Mammary epithelial cell (primary cell): ENCODE measurements at regions of chr2 and their contacts with region 1.

Region 1: DNA sequence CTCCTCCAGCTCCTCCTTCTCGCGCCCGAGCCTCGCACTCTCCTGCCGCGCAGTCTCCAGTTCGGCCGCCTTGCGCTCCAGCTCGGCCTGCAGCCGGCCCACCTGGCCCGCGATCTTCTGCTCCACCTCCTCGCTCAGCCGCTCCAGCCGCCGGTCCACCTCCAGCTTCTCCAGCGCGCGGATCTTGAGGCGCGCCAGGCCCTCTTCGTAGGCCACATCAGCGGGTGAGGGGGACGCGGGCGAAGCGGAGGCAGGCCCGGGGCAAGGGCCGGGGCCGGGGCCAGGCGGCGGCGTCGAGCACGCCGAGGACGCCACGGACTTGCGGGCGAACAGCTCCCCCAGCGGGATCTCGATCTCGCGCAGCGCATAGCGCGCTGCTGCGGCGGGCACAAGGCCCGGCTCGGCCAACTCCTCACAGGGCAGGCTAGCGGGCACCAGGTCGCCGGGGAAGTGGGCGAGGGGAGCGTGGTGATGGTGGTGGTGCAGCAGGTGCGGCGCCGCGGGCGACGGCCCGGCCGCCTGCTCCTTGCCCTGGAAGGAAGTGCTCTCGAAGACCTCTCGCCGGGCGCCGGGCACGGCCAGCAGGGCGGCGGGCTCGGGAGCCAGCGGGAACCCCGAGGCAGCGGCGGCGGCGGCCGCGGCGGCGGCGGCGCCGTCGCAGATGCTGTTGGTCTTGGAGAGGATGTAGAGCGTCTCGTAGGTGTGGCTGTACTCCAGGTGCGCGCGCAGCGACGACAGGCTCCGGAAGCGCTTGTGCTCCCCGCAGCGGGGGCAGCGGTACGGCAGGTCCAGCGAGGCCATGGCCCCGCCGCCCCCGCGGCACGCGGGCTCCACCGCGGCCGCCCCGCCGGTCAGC is 15.2 kb downstream of the FBXO41 start:
- DNase-seq: peak; percentile 70
- H3K4me3 ChIP-seq: peak overlapping the region; percentile 14 to 50 (median 50)
- H3K27ac ChIP-seq: no peak overlapping the region
- H3K4me1 ChIP-seq: peaks cover 13% of the 10 kb centered on the region
- H3K27me3 ChIP-seq: no peaks in the 10 kb centered on the region
- CTCF ChIP-seq: peak in 1 of 2 donors; percentile 34

Region 2: DNA sequence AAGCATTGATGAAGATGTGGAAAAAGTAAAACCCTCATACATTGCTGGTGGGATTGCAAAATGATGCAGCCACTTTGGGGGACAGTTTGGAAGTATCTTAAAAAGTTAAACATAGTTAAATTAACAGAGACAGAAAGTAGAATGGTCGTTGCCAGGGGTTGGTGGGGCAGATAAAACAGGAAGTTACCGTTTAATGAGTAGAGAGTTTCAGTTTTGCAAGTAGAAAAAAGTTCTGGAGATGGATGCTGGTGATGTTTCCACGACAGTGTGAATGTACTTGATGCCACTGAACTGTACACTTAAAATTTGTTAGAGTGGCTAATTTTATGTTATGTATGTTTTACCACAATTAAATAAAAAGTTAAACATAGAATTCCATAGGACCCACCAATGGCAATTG is 68.8 kb after region 1 on chr2:
- CTCF ChIA-PET with region 1: interaction called, 12 read pairs
- dilution Hi-C with region 1: no loop called
- in situ Hi-C with region 1: no loop called
- intact Hi-C with region 1: no loop called
- DNase-seq: no peak
- H3K4me3 ChIP-seq: no peak overlapping the region
- H3K27ac ChIP-seq: no peak overlapping the region
- H3K4me1 ChIP-seq: no peaks in the 10 kb centered on the region
- H3K27me3 ChIP-seq: peaks cover 2% of the 10 kb centered on the region
- CTCF ChIP-seq: no peak

Region 3: DNA sequence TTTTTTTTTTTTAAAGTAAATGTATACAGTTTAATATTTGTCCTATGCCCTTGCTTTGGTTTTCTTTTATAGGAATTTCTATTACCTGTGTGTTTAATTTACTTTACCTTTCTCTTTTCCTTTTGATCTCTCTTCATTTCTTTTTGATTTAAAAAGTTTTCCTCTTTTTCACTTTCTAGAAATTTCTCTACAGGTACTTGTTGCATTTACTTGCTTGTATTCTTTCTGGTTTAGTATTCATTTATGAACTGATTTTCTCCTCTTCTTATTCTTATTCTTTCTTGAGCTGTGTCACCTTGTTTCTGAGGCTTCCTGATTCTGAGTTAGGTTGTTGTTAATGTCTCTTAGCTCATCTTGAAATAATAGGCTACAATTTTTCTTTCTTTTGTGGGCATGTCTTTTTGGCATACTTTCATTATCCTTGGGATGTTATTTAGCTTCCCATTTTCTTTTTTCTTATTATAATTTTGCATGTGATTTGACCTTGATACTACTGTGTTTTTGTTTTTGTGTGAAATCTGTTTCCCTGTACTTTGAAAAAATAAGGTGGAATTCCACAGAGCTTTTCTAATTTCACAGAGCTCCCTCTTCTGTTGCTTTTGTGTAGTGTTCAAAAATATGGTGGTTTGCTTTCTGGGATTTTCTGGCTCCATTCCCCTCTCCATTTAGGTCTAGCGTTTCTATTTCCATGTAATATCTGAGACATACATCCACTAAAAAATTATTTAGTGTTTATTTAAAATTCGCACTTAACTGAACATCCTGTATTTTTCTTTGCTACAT is 91.0 kb after region 1 on chr2:
- CTCF ChIA-PET with region 1: no interaction called
- dilution Hi-C with region 1: no loop called
- in situ Hi-C with region 1: no loop called
- intact Hi-C with region 1: loop called (anchors 1 kb)
- DNase-seq: no peak
- H3K4me3 ChIP-seq: no peak overlapping the region
- H3K27ac ChIP-seq: no peak overlapping the region
- H3K4me1 ChIP-seq: no peaks in the 10 kb centered on the region
- H3K27me3 ChIP-seq: no peaks in the 10 kb centered on the region
- CTCF ChIP-seq: peak; percentile 32 to 45

Region 4: GRCh38 chr2:73716543-73717250 is 447.6 kb after region 1 on chr2:
- CTCF ChIA-PET with region 1: no interaction called
- dilution Hi-C with region 1: no loop called
- in situ Hi-C with region 1: no loop called
- intact Hi-C with region 1: no loop called
- DNase-seq: no peak
- H3K4me3 ChIP-seq: no peak overlapping the region
- H3K27ac ChIP-seq: no peak overlapping the region
- H3K4me1 ChIP-seq: no peaks in the 10 kb centered on the region
- H3K27me3 ChIP-seq: no peaks in the 10 kb centered on the region
- CTCF ChIP-seq: no peak